Activated naive CD4-positive, alpha-beta T cell treated with anti-CD3 and anti-CD28 coated beads for 36 hours (primary cell): ENCODE measurements at regions of chr2 and their contacts with region 1.

Region 1: DNA sequence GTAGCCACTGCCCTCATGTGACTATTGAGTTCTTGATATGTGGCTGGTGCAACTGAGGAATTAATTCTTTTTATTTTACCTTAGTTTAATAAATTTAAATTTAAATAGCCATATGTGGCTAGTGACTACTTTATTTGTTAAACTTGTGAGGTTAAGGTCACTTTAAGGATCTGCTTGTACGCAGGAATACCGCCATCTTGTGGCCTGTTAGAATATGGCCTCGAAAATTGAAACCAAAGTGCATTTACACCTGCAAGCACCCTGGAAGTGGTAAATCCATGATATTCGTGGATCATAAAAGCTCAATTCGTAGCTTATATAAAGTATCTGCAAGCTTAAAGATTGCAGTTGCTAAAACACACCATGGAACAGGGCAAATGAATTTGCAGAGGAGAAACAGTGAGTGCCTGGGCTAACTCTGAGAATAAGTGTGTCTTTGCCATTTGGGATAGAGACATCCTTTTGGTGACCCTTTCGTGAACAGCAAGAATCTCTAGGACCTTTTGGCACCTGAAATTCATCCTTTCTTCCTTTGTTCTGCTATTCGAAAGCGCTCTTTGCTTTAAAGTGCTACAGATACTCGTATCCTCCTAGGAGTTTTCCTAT is 59.9 kb upstream of the REG3A start:
- DNase-seq: peak; percentile 53
- H3K4me3 Mint-ChIP-seq: no peak overlapping the region
- H3K27ac Mint-ChIP-seq: no peak overlapping the region
- H3K4me1 Mint-ChIP-seq: no peaks in the 10 kb centered on the region
- H3K27me3 Mint-ChIP-seq: no peaks in the 10 kb centered on the region

Region 2: GRCh38 chr2:78431242-78431641 is 788.2 kb before region 1 on chr2:
- CTCF ChIA-PET with region 1: no interaction called
- intact Hi-C with region 1: no loop called
- DNase-seq: no peak
- H3K4me3 Mint-ChIP-seq: no peak overlapping the region
- H3K27ac Mint-ChIP-seq: no peak overlapping the region
- H3K4me1 Mint-ChIP-seq: no peaks in the 10 kb centered on the region
- H3K27me3 Mint-ChIP-seq: no peaks in the 10 kb centered on the region

Region 3: DNA sequence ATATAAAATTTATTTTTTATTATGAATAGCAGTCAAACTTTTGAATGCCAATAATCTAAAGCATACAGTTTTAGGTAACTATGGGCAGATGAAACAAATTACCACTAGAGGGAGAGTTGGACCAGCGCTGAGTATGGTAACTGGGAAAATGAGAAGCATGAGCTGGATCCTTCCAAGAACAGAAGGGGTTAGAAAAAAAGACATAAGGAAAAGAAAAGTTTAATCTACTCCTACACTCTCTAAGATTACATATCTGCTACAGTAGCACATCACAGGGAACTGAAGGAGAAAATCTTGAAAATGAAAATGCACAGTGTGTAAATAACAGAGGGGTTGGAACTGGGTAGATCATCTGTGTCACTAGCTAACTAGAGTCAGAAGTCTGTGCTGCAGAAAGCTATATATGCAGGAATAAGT is 178.4 kb before region 1 on chr2:
- CTCF ChIA-PET with region 1: no interaction called
- intact Hi-C with region 1: loop called (anchors 1 kb)
- DNase-seq: no peak
- H3K4me3 Mint-ChIP-seq: no peak overlapping the region
- H3K27ac Mint-ChIP-seq: no peak overlapping the region
- H3K4me1 Mint-ChIP-seq: no peaks in the 10 kb centered on the region
- H3K27me3 Mint-ChIP-seq: no peaks in the 10 kb centered on the region

Region 4: GRCh38 chr2:79612999-79613398 is 393.5 kb after region 1 on chr2:
- CTCF ChIA-PET with region 1: no interaction called
- intact Hi-C with region 1: no loop called
- DNase-seq: no peak
- H3K4me3 Mint-ChIP-seq: no peak overlapping the region
- H3K27ac Mint-ChIP-seq: no peak overlapping the region
- H3K4me1 Mint-ChIP-seq: no peaks in the 10 kb centered on the region
- H3K27me3 Mint-ChIP-seq: no peaks in the 10 kb centered on the region